T-cell (primary cell): ENCODE measurements at regions of chr18 and their contacts with region 1.

Region 1: GRCh38 chr18:22113144-22113830 is 56.1 kb upstream of the GATA6 start:
- DNase-seq: no peak
- ATAC-seq: no peak
- H3K4me3 ChIP-seq: no peak overlapping the region
- H3K4me3 Mint-ChIP-seq: no peak overlapping the region
- H3K27ac ChIP-seq: no peak overlapping the region
- H3K27ac Mint-ChIP-seq: no peak overlapping the region
- H3K4me1 ChIP-seq: no peaks in the 10 kb centered on the region
- H3K4me1 Mint-ChIP-seq: no peaks in the 10 kb centered on the region
- H3K27me3 ChIP-seq: peaks cover 0 to 2% of the 10 kb centered on the region in 2 experiments
- H3K27me3 Mint-ChIP-seq: no peaks in the 10 kb centered on the region

Region 2: DNA sequence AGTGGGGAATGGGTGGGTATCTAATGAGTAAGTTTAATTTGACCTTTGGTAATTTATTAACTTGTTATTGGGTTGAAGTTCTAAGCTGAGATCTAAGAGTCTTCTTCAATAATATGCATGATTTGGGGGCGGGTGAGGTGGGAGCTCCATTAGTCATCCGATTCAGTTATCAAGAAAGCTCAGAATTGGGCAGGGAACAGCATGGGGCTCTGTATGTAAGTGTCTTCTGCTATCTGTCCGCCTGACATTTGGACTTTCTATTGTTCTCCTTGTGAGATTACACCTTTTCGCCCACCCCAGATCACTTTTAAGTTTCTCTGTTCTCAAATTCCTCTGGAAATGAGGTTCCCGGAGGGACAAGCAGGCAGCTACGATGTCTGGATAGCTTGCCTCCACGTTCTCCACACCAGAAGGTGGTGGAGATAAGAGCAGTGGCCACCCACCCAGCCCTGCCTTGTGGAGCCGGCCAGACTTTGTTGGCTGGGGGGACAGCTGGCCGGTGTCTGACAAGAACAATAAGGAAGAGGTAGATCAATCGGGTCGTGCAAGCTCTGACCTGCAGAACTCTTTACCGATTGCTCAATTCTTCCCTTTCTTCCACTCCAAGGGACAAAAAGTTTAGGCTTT is 19.4 kb before region 1 on chr18:
- CTCF ChIA-PET with region 1: interaction called in 1 of 2 experiments, 12 read pairs
- POLR2A ChIA-PET with region 1: no interaction called
- DNase-seq: no peak
- ATAC-seq: no peak
- H3K4me3 ChIP-seq: no peak overlapping the region
- H3K4me3 Mint-ChIP-seq: no peak overlapping the region
- H3K27ac ChIP-seq: no peak overlapping the region
- H3K27ac Mint-ChIP-seq: no peak overlapping the region
- H3K4me1 ChIP-seq: no peaks in the 10 kb centered on the region
- H3K4me1 Mint-ChIP-seq: no peaks in the 10 kb centered on the region
- H3K27me3 ChIP-seq: peaks cover 0 to 9% of the 10 kb centered on the region in 2 experiments
- H3K27me3 Mint-ChIP-seq: peaks cover 3 to 7% of the 10 kb centered on the region in 2 donors

Region 3: GRCh38 chr18:22268641-22269128 is 155.4 kb after region 1 on chr18:
- CTCF ChIA-PET with region 1: no interaction called
- POLR2A ChIA-PET with region 1: no interaction called
- DNase-seq: no peak
- ATAC-seq: no peak
- H3K4me3 ChIP-seq: no peak overlapping the region
- H3K4me3 Mint-ChIP-seq: no peak overlapping the region
- H3K27ac ChIP-seq: no peak overlapping the region
- H3K27ac Mint-ChIP-seq: no peak overlapping the region
- H3K4me1 ChIP-seq: peaks cover 0 to 4% of the 10 kb centered on the region in 2 experiments
- H3K4me1 Mint-ChIP-seq: no peaks in the 10 kb centered on the region
- H3K27me3 ChIP-seq: peaks cover 0 to 4% of the 10 kb centered on the region in 2 experiments
- H3K27me3 Mint-ChIP-seq: peaks cover 3 to 5% of the 10 kb centered on the region in 2 donors